Right ventricle myocardium inferior (tissue), 1 donor: ENCODE measurements at regions of chr11 and their contacts with region 1.

Region 1: GRCh38 chr11:17207317-17208258 is at the start of gene PIK3C2A:
- DNase-seq: peak; percentile 99
- ATAC-seq: peak; percentile 97
- total RNA-seq, gene PIK3C2A: 29.9 TPM

Region 2: GRCh38 chr11:17077520-17078401 is 129.8 kb before region 1 on chr11 and contains the start of gene RPS13:
- intact Hi-C with region 1: loop called (anchors 5 kb)
- DNase-seq: peak; percentile 98
- ATAC-seq: peak; percentile 99
- total RNA-seq, gene RPS13: 811 TPM

Region 3: GRCh38 chr11:17164361-17165246 is 43.0 kb before region 1 on chr11:
- intact Hi-C with region 1: loop called (anchors 5 kb)
- DNase-seq: no peak
- ATAC-seq: peak; percentile 50

Region 4: GRCh38 chr11:17276236-17277023 is 68.8 kb after region 1 on chr11 and contains the start of gene NUCB2:
- intact Hi-C with region 1: loop called (anchors 5 kb)
- DNase-seq: peak; percentile 99
- ATAC-seq: peak; percentile 100
- total RNA-seq, gene NUCB2: 111 TPM